H1 (cell line): ENCODE measurements at regions of chr1 and their contacts with region 1.

Region 1: DNA sequence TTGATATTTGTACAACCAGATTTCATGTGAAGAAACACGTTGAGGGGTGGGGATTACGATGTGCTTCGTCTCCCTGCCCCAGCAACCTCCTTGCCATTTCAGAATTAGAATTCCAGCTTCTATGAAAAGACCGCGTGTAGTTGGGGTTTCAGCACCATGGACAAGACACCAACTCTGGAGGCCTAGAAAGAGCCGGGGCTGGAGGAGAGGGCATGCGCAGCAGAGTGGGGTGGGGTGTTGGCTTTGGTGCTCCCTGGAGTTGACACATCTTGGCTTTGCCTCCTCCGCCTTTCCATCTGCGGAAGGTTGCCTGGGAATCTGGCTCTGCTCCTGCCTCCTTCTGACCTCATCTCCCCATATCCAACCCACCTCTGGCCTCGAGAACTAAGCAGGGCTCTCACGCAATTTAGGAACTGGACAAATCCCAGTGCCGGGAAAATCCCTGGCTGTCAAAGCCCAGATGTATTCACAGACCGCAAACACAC is 11.8 kb downstream of the HTR6 start:
- DNase-seq: peak; percentile 25 to 82
- H3K4me3 ChIP-seq: no peak overlapping the region
- H3K27ac ChIP-seq: no peak overlapping the region
- H3K4me1 ChIP-seq: peaks cover 0 to 7% (median 2%) of the 10 kb centered on the region in 4 experiments; a peak in 1 of 7 replicates
- H3K27me3 ChIP-seq: no peaks in the 10 kb centered on the region; a peak in 2 of 7 replicates
- CTCF ChIP-seq: no peak
- EP300 ChIP-seq: no peak
- POLR2A ChIP-seq: no peak
- RAD21 ChIP-seq: no peak

Region 2: GRCh38 chr1:19689085-19689757 is 12.7 kb after region 1 on chr1:
- CTCF ChIA-PET with region 1: interaction called, 14 read pairs
- POLR2A ChIA-PET with region 1: interaction called, 3 read pairs
- DNase-seq: no peak
- H3K4me3 ChIP-seq: no peak overlapping the region
- H3K27ac ChIP-seq: no peak overlapping the region
- H3K4me1 ChIP-seq: peaks cover 3 to 13% (median 10%) of the 10 kb centered on the region in 4 experiments
- H3K27me3 ChIP-seq: no peaks in the 10 kb centered on the region
- CTCF ChIP-seq: no peak
- EP300 ChIP-seq: no peak
- POLR2A ChIP-seq: no peak
- RAD21 ChIP-seq: no peak